ENCODE measurements at regions of chr4 and their contacts with region 1.

Region 1: GRCh38 chr4:122577808-122578781 is 42.8 kb downstream of the IL21 start:
- DNase-seq: peak; percentile 70
- H3K4me3 Mint-ChIP-seq: peak overlapping the region; percentile 80
- H3K27ac Mint-ChIP-seq: peak overlapping the region; percentile 96
- H3K4me1 Mint-ChIP-seq: peaks cover 63% of the 10 kb centered on the region
- H3K27me3 Mint-ChIP-seq: no peaks in the 10 kb centered on the region

Region 2: GRCh38 chr4:121950212-121950679 is 627.8 kb before region 1 on chr4:
- intact Hi-C with region 1: loop called (anchors 1 kb)
- DNase-seq: peak; percentile 74
- H3K4me3 Mint-ChIP-seq: peak overlapping the region; percentile 89
- H3K27ac Mint-ChIP-seq: peak overlapping the region; percentile 46
- H3K4me1 Mint-ChIP-seq: peaks cover 26% of the 10 kb centered on the region
- H3K27me3 Mint-ChIP-seq: peaks cover 50% of the 10 kb centered on the region

Region 3: GRCh38 chr4:122170775-122171174 is 407.3 kb before region 1 on chr4:
- intact Hi-C with region 1: no loop called
- DNase-seq: no peak
- H3K4me3 Mint-ChIP-seq: no peak overlapping the region
- H3K27ac Mint-ChIP-seq: no peak overlapping the region
- H3K4me1 Mint-ChIP-seq: peaks cover 13% of the 10 kb centered on the region
- H3K27me3 Mint-ChIP-seq: no peaks in the 10 kb centered on the region

Region 4: GRCh38 chr4:122224348-122224747 is 353.7 kb before region 1 on chr4:
- intact Hi-C with region 1: loop called (anchors 5 kb)
- DNase-seq: no peak
- H3K4me3 Mint-ChIP-seq: no peak overlapping the region
- H3K27ac Mint-ChIP-seq: no peak overlapping the region
- H3K4me1 Mint-ChIP-seq: no peaks in the 10 kb centered on the region
- H3K27me3 Mint-ChIP-seq: no peaks in the 10 kb centered on the region

Region 5: GRCh38 chr4:122508083-122508482 is 70.0 kb before region 1 on chr4:
- intact Hi-C with region 1: loop called (anchors 1 kb)
- DNase-seq: no peak
- H3K4me3 Mint-ChIP-seq: peak overlapping the region; percentile 71
- H3K27ac Mint-ChIP-seq: peak overlapping the region; percentile 89
- H3K4me1 Mint-ChIP-seq: peaks cover 69% of the 10 kb centered on the region
- H3K27me3 Mint-ChIP-seq: no peaks in the 10 kb centered on the region

Region 6: GRCh38 chr4:122525865-122526264 is 52.2 kb before region 1 on chr4:
- intact Hi-C with region 1: no loop called
- DNase-seq: no peak
- H3K4me3 Mint-ChIP-seq: no peak overlapping the region
- H3K27ac Mint-ChIP-seq: no peak overlapping the region
- H3K4me1 Mint-ChIP-seq: no peaks in the 10 kb centered on the region
- H3K27me3 Mint-ChIP-seq: no peaks in the 10 kb centered on the region

Region 7: GRCh38 chr4:122658818-122659295 is 80.8 kb after region 1 on chr4:
- intact Hi-C with region 1: loop called (anchors 2 kb)
- DNase-seq: no peak
- H3K4me3 Mint-ChIP-seq: peak overlapping the region; percentile 66
- H3K27ac Mint-ChIP-seq: peak overlapping the region; percentile 94
- H3K4me1 Mint-ChIP-seq: peaks cover 59% of the 10 kb centered on the region
- H3K27me3 Mint-ChIP-seq: no peaks in the 10 kb centered on the region

Measured in activated T-helper 1 cell treated with anti-CD3 and anti-CD28 coated beads, Interleukin-12 subunit alpha, Interleukin-12 subunit beta, Interleukin-2, Interleukin-4 antibody, amounts not matched to agents 30 ng/mL and 10 ng/mL and 1 ng/mL, durations not matched to agents 14 hours and 24 hours and 36 hours (primary cell).